Vagina (tissue), 2 donors: ENCODE measurements at regions of chr12 and their contacts with region 1.

Region 1: GRCh38 chr12:4322726-4323125 is 1.7 kb downstream of the TIGAR start:
- DNase-seq: no peak
- H3K4me3 ChIP-seq: no peak overlapping the region
- H3K27ac ChIP-seq: no peak overlapping the region
- H3K4me1 ChIP-seq: peaks cover 16% of the 10 kb centered on the region
- H3K27me3 ChIP-seq: no peaks in the 10 kb centered on the region
- CTCF ChIP-seq: no peak
- POLR2A ChIP-seq: no peak

Region 2: DNA sequence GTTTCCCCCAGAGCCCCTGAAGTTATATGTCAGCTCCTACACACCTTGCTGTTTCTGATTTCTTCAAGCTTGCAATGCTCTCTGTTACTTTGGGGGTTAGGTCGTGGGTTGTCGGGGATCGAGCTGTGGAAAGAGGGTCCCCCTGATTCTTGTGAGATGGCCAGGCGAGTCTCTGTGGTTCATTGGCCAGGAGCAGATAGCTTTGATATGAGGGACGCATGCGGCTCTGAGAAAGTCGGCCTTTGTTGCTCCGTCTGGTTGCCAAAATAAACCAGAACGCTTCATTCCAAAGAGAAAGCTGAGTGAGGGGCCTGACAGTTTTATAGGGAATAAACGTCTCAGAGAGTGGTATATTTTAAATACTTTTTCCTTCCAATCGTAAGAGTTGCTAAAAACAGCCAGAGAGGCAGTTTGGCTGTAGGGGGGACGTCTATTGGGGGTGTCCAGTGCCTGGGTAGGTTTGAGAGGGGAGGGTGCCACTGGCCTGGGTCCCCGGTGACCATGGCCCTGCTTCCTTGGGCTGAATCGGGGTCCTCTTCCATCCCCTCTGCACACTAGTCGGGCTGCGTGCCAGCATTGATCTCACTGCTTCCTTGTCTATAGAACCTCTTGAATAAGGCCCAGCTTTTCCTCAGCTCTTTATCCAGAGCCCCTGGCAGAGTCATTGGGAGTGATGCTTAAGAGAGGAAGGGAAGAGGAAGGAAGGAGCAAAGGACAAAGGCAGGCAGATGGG is 30.2 kb before region 1 on chr12:
- intact Hi-C with region 1: loop called (anchors 1 kb)
- DNase-seq: no peak
- H3K4me3 ChIP-seq: no peak overlapping the region
- H3K27ac ChIP-seq: peak overlapping the region; percentile 10
- H3K4me1 ChIP-seq: peaks cover 50% of the 10 kb centered on the region
- H3K27me3 ChIP-seq: no peaks in the 10 kb centered on the region
- CTCF ChIP-seq: no peak
- POLR2A ChIP-seq: no peak

Region 3: GRCh38 chr12:4356041-4356327 is 33.3 kb after region 1 on chr12:
- intact Hi-C with region 1: no loop called
- DNase-seq: no peak
- H3K4me3 ChIP-seq: no peak overlapping the region
- H3K27ac ChIP-seq: no peak overlapping the region
- H3K4me1 ChIP-seq: no peaks in the 10 kb centered on the region
- H3K27me3 ChIP-seq: no peaks in the 10 kb centered on the region
- CTCF ChIP-seq: no peak
- POLR2A ChIP-seq: no peak